AG04450 (cell line): ENCODE measurements at regions of chr7 and their contacts with region 1.

Region 1: GRCh38 chr7:124765401-124766352 is at the start of gene GPR37:
- DNase-seq: peak; percentile 78
- H3K4me3 ChIP-seq: peak within 1 kb of the TSS; percentile 90
- H3K27ac ChIP-seq: peak within 1 kb of the TSS; percentile 82
- H3K27me3 ChIP-seq: no peaks in the 10 kb centered on the region
- CTCF ChIP-seq: peak; percentile 78
- polyA plus RNA-seq, gene GPR37: 5.5 and 11.2 TPM in 2 replicates

Region 2: GRCh38 chr7:124171068-124171467 is 594.6 kb before region 1 on chr7:
- CTCF ChIA-PET with region 1: interaction called, 59 read pairs
- POLR2A ChIA-PET with region 1: no interaction called
- DNase-seq: peak; percentile 37
- H3K4me3 ChIP-seq: no peak overlapping the region
- H3K27ac ChIP-seq: no peak overlapping the region
- H3K27me3 ChIP-seq: no peaks in the 10 kb centered on the region
- CTCF ChIP-seq: peak; percentile 77

Region 3: DNA sequence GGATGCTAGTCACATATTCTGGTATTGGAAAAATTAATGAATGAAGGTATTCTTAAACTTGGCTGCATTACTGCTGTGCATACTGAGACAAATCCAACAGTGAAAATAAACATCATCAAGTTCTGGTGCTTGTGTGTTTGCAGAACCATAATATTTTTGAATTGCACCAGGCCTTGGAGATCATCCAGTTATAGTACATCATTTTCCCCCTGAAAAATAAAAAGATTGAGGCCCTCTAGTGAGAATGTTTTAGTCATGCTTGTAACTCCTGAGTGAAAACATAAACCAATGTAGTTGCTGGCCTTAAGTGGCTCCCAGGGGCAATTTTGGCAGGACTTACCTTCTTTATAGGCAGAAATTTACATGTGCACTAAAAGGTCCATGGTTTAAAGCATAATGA is 514.0 kb before region 1 on chr7:
- CTCF ChIA-PET with region 1: interaction called, 15 read pairs
- POLR2A ChIA-PET with region 1: interaction called, 4 read pairs
- DNase-seq: no peak
- H3K4me3 ChIP-seq: no peak overlapping the region
- H3K27ac ChIP-seq: no peak overlapping the region
- H3K27me3 ChIP-seq: no peaks in the 10 kb centered on the region
- CTCF ChIP-seq: no peak

Region 4: DNA sequence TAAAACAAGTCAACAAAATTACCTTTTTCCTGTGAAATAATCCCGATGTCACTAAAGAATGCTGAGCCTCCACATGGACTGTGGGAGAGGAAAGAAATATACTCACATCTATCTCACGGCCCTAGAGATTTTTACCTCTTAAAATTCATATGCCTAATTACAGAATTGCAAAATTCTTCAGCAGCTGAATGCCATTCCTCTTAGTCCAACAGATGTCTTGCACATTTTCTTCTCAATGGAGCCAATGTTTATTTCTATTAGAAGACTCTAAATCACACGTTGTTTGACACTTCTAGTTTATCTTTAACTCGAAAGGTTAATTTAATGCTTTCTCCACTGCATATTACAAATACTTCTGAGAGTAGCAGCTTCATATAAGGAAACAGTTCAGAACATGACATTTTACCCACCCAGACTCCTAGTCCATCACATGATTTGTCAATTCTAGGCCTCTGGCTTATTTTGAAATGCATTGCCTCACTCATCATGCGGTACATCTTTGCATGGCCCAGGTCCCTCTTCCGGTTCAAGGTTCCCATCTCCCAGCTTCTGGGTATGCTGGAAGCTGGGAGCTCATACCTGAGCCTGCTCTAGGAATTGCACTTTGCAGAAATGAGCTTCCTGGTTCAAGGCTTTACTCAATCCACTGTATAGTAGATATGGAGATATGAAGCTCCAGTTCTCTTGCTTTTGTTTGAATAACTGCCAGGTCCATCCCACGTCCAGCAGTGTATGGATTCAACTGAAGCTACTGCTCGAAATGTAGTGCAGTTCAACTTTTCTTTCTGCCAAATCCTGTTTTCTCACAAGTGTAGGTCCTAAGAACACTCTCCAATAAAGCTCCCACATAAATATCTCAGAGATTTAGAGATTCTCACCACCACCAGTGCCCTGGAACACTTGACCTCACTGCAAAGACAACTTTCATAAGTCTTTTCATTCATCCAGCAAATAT is 306.3 kb before region 1 on chr7:
- CTCF ChIA-PET with region 1: interaction called, 25 read pairs
- POLR2A ChIA-PET with region 1: interaction called, 16 read pairs
- DNase-seq: peak; percentile 79
- H3K4me3 ChIP-seq: no peak overlapping the region
- H3K27ac ChIP-seq: peak overlapping the region; percentile 84
- H3K27me3 ChIP-seq: no peaks in the 10 kb centered on the region
- CTCF ChIP-seq: no peak

Region 5: GRCh38 chr7:124777268-124777667 is 11.6 kb after region 1 on chr7:
- CTCF ChIA-PET with region 1: interaction called, 25 read pairs
- POLR2A ChIA-PET with region 1: no interaction called
- DNase-seq: no peak
- H3K4me3 ChIP-seq: no peak overlapping the region
- H3K27ac ChIP-seq: no peak overlapping the region
- H3K27me3 ChIP-seq: no peaks in the 10 kb centered on the region
- CTCF ChIP-seq: no peak

Region 6: GRCh38 chr7:124784879-124785818 is 19.5 kb after region 1 on chr7:
- CTCF ChIA-PET with region 1: interaction called, 25 read pairs
- POLR2A ChIA-PET with region 1: interaction called, 4 read pairs
- DNase-seq: peak; percentile 65
- H3K4me3 ChIP-seq: no peak overlapping the region
- H3K27ac ChIP-seq: no peak overlapping the region
- H3K27me3 ChIP-seq: no peaks in the 10 kb centered on the region
- CTCF ChIP-seq: peak; percentile 95